Tibial artery (tissue), 4 donors: ENCODE measurements at regions of chr5 and their contacts with region 1.

Region 1: DNA sequence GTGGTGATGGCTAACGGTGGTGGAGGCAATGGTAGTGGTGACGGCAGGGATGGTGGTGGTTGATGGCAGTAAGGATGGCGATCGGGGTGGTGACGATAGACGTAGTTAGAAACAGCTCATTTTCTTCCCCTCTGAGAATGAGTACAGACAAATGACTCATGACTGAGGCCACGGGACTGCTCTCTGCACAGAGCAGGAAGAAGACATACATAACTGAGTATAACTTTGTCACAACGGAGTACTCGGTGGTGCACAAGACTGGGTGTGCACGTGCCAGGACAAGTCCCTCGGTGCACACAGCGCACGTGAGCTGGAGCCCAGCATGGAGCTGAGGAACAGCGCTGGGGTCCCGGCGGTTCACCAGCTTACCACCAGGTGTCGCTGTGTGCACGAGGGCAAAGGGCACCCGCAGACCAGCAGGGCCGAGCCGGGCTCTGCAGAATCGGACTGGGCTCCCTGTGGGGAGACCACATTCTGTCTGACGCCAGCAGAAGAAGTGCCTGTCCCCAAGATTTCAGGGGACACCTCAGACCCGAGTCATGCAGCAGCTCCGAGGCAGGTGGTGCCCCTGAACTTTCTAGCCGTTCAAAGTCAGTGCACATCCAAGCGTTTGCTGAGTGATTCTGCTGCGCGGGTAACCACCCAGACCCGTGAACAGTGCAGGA is 188.6 kb downstream of the FSTL4 start:
- DNase-seq: peak; percentile 43 to 78
- H3K4me3 ChIP-seq: no peak overlapping the region
- H3K27ac ChIP-seq: no peak overlapping the region
- H3K4me1 ChIP-seq: peaks cover 0 to 12% (median 6%) of the 10 kb centered on the region in 4 donors
- H3K27me3 ChIP-seq: peaks cover 0 to 21% of the 10 kb centered on the region in 2 donors
- CTCF ChIP-seq: peak; percentile 83 to 92

Region 2: DNA sequence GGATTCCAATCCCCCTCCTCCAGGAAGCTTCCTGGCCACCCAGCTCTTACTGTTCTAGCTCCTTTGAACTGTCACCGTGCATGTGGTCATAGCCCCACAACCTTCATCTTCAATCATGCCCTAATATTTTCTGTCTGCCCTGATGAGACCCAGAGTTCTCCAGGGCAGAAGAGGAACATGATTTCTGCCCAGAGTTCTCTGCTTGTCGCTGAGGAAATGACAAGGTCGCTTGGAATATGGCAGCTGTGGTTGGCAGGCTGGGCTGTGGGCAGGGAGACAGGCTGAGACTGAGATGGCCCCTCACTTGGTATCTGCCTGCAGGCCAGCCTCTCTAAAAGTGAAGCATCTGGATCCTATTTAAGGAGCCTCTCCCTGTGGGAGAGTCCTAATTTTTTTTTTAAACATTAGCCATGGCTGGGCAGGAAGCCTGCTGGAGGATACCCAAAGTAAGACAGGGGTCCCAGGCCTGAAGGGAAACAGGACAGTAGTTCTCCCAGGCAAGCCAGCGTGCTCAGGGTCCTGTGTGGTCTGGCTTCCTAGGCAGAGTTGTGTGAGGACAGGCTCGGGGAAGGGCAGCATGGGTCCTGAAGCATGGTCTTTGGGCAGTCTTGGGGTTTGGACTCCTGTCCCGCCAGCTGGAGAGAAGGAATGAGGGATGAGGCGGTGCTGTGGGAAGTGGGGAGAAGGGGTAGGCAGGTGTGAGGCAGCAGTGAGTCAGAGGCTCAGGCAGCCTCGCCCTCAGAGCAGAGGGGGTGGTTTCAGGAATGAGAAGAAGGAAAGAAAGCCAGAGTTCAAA is 53.5 kb before region 1 on chr5:
- intact Hi-C with region 1: no loop called
- DNase-seq: peak in 1 of 2 donors; percentile 47
- H3K4me3 ChIP-seq: no peak overlapping the region
- H3K27ac ChIP-seq: no peak overlapping the region
- H3K4me1 ChIP-seq: no peaks in the 10 kb centered on the region
- H3K27me3 ChIP-seq: peaks cover 0 to 22% of the 10 kb centered on the region in 2 donors
- CTCF ChIP-seq: no peak

Region 3: GRCh38 chr5:133868946-133869518 is 445.3 kb after region 1 on chr5:
- intact Hi-C with region 1: loop called (anchors 10 kb)
- DNase-seq: peak; percentile 71 to 85
- H3K4me3 ChIP-seq: peak overlapping the region; percentile 16 to 22
- H3K27ac ChIP-seq: peak overlapping the region in 1 of 2 donors; percentile 41
- H3K4me1 ChIP-seq: peaks cover 0 to 7% (median 3%) of the 10 kb centered on the region in 4 donors
- H3K27me3 ChIP-seq: no peaks in the 10 kb centered on the region
- CTCF ChIP-seq: peak; percentile 75 to 79

Region 4: DNA sequence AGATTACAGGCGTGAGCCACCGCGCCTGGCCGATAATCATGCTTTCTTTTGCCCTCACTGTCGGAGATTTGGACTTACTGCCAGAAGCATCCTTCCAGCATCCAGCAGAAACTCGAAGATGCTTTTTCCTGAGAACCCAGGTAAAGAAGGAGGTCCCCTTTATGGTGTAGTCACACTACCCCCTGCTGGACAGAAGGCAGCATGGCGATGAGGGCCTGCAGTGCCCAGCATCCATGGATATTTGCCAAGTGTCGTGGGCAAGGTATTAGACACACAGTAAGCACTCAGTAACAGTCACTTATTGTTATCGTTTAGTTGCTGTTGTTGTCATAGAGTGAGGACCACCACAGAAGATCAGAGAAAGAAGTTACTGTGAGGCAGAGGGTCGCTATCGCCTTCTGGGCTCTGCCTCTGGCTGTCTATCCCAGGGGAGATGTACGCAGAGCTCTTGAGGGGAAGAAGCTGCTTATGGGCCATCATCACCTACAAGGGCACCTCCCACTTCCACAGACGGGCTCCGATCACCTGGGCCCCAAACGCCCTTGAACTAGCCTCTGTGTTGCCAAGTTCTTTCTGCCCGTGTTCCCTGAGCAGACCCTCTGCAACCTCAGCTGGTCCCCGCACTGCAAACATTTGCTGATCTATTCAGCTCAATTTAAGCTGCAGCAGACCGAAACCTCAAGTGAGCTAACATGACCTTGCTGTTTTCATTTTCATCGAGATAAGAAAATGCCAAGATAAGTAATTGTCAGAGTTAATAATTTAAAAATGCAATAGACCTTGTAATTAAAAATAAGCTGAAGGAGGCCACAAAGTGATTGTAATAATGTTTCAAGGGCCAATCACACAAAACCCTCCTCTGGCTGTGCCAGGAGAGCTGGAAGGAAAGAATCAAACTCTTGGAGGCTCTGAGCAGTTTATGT is 520.8 kb after region 1 on chr5:
- intact Hi-C with region 1: loop called (anchors 10 kb)
- DNase-seq: peak in 1 of 2 donors; percentile 51
- H3K4me3 ChIP-seq: no peak overlapping the region
- H3K27ac ChIP-seq: no peak overlapping the region
- H3K4me1 ChIP-seq: peaks cover 0 to 31% (median 19%) of the 10 kb centered on the region in 4 donors
- H3K27me3 ChIP-seq: no peaks in the 10 kb centered on the region
- CTCF ChIP-seq: peak; percentile 34 to 49